CD8-positive, alpha-beta T cell (primary cell): ENCODE measurements at regions of chr12 and their contacts with region 1.

Region 1: GRCh38 chr12:45543906-45544315 is 185.6 kb upstream of the ARID2 start:
- DNase-seq: peak; percentile 5 to 82 (median 35)
- ATAC-seq: peak; percentile 89
- H3K4me3 ChIP-seq: no peak overlapping the region
- H3K4me3 Mint-ChIP-seq: no peak overlapping the region
- H3K27ac ChIP-seq: no peak overlapping the region
- H3K27ac Mint-ChIP-seq: no peak overlapping the region
- H3K4me1 ChIP-seq: no peaks in the 10 kb centered on the region
- H3K4me1 Mint-ChIP-seq: peaks cover 2% of the 10 kb centered on the region
- H3K27me3 ChIP-seq: no peaks in the 10 kb centered on the region
- H3K27me3 Mint-ChIP-seq: no peaks in the 10 kb centered on the region
- CTCF ChIP-seq: peak; percentile 75

Region 2: DNA sequence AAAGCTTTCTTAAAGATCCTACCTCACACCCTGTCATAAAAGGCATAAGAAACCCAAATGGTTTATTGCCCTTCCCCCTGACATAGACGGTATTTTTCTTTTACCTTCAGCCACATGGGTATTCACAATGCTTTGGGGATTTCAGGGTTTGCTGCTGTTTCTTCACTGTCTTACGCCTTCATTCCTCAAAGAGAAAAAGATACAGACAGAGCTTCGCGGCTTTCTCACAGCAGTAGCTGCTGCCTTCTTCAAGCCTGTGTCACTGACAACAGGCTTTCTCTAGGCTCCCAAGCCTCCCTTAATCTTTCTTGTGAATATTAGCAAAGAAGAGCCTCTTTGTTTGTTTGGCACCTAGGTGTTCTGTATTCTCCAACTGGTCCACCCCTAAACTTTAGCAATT is 11.8 kb before region 1 on chr12:
- CTCF ChIA-PET with region 1: interaction called, 10 read pairs
- POLR2A ChIA-PET with region 1: no interaction called
- intact Hi-C with region 1: no loop called
- DNase-seq: no peak
- ATAC-seq: no peak
- H3K4me3 ChIP-seq: no peak overlapping the region
- H3K4me3 Mint-ChIP-seq: no peak overlapping the region
- H3K27ac ChIP-seq: no peak overlapping the region
- H3K27ac Mint-ChIP-seq: no peak overlapping the region
- H3K4me1 ChIP-seq: no peaks in the 10 kb centered on the region
- H3K4me1 Mint-ChIP-seq: no peaks in the 10 kb centered on the region
- H3K27me3 ChIP-seq: peaks cover 0 to 2% of the 10 kb centered on the region in 2 experiments
- H3K27me3 Mint-ChIP-seq: peaks cover 9% of the 10 kb centered on the region
- CTCF ChIP-seq: no peak

Region 3: DNA sequence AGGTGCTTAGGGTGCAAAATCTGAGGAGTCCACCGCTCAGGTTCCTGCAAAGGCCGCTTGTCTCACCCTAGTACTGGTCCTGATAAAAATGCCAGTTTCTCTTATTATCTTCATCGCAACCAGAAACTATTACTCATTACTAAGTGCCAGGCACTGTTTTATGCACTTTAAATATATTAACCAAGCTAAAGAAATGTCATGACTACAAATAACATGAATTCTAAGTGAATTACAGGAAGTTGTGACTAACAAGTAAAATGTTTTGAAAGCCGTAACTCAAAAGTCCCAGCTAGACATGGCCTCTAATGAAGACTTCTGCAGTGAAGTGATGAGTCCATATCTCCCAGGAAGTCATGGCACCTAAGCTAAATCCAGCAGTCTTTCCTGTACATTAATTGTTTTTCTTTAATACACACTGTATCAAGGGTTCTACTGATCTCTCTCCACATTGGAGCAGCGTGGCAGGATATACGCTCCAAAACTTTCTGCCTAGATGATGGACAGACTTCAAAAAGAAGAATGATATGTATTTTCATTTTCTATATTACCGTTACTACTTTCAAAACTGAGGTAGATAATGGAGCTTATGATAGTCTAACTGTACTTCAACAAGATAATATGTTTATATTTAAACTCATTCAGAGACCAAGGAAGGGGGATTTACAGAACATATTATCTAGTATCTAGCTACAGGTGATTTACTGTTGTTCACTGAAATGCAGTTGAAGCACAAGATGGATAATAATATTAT is 68.3 kb after region 1 on chr12:
- CTCF ChIA-PET with region 1: no interaction called
- POLR2A ChIA-PET with region 1: no interaction called
- intact Hi-C with region 1: no loop called
- DNase-seq: no peak
- ATAC-seq: no peak
- H3K4me3 ChIP-seq: no peak overlapping the region
- H3K4me3 Mint-ChIP-seq: no peak overlapping the region
- H3K27ac ChIP-seq: no peak overlapping the region
- H3K27ac Mint-ChIP-seq: no peak overlapping the region
- H3K4me1 ChIP-seq: no peaks in the 10 kb centered on the region
- H3K4me1 Mint-ChIP-seq: no peaks in the 10 kb centered on the region
- H3K27me3 ChIP-seq: no peaks in the 10 kb centered on the region
- H3K27me3 Mint-ChIP-seq: peaks cover 6% of the 10 kb centered on the region
- CTCF ChIP-seq: no peak

Region 4: GRCh38 chr12:45745861-45746277 is 202.0 kb after region 1 on chr12:
- CTCF ChIA-PET with region 1: interaction called, 33 read pairs
- POLR2A ChIA-PET with region 1: interaction called, 3 read pairs
- intact Hi-C with region 1: loop called (anchors 1 kb)
- DNase-seq: peak in 2 of 9 experiments; percentile 31 to 53
- ATAC-seq: peak; percentile 80
- H3K4me3 ChIP-seq: no peak overlapping the region
- H3K4me3 Mint-ChIP-seq: no peak overlapping the region
- H3K27ac ChIP-seq: no peak overlapping the region
- H3K27ac Mint-ChIP-seq: no peak overlapping the region
- H3K4me1 ChIP-seq: peaks cover 6% of the 10 kb centered on the region
- H3K4me1 Mint-ChIP-seq: peaks cover 66% of the 10 kb centered on the region
- H3K27me3 ChIP-seq: no peaks in the 10 kb centered on the region
- H3K27me3 Mint-ChIP-seq: no peaks in the 10 kb centered on the region
- CTCF ChIP-seq: peak; percentile 57

Region 5: GRCh38 chr12:45839917-45840316 is 296.0 kb after region 1 on chr12:
- CTCF ChIA-PET with region 1: no interaction called
- POLR2A ChIA-PET with region 1: no interaction called
- intact Hi-C with region 1: loop called (anchors 10 kb)
- DNase-seq: no peak
- ATAC-seq: no peak
- H3K4me3 ChIP-seq: no peak overlapping the region
- H3K4me3 Mint-ChIP-seq: no peak overlapping the region
- H3K27ac ChIP-seq: no peak overlapping the region
- H3K27ac Mint-ChIP-seq: no peak overlapping the region
- H3K4me1 ChIP-seq: no peaks in the 10 kb centered on the region
- H3K4me1 Mint-ChIP-seq: no peaks in the 10 kb centered on the region
- H3K27me3 ChIP-seq: no peaks in the 10 kb centered on the region
- H3K27me3 Mint-ChIP-seq: no peaks in the 10 kb centered on the region
- CTCF ChIP-seq: no peak

Region 6: GRCh38 chr12:46005151-46005797 is 461.4 kb after region 1 on chr12:
- CTCF ChIA-PET with region 1: no interaction called
- POLR2A ChIA-PET with region 1: no interaction called
- intact Hi-C with region 1: loop called in 1 of 2 experiments (anchors 2 kb)
- DNase-seq: peak in 2 of 9 experiments; percentile 28 to 42
- ATAC-seq: no peak
- H3K4me3 ChIP-seq: no peak overlapping the region
- H3K4me3 Mint-ChIP-seq: no peak overlapping the region
- H3K27ac ChIP-seq: no peak overlapping the region
- H3K27ac Mint-ChIP-seq: no peak overlapping the region
- H3K4me1 ChIP-seq: no peaks in the 10 kb centered on the region
- H3K4me1 Mint-ChIP-seq: no peaks in the 10 kb centered on the region
- H3K27me3 ChIP-seq: no peaks in the 10 kb centered on the region
- H3K27me3 Mint-ChIP-seq: no peaks in the 10 kb centered on the region
- CTCF ChIP-seq: peak; percentile 41